ENCODE measurements at regions of chr2 and their contacts with region 1.

Region 1: DNA sequence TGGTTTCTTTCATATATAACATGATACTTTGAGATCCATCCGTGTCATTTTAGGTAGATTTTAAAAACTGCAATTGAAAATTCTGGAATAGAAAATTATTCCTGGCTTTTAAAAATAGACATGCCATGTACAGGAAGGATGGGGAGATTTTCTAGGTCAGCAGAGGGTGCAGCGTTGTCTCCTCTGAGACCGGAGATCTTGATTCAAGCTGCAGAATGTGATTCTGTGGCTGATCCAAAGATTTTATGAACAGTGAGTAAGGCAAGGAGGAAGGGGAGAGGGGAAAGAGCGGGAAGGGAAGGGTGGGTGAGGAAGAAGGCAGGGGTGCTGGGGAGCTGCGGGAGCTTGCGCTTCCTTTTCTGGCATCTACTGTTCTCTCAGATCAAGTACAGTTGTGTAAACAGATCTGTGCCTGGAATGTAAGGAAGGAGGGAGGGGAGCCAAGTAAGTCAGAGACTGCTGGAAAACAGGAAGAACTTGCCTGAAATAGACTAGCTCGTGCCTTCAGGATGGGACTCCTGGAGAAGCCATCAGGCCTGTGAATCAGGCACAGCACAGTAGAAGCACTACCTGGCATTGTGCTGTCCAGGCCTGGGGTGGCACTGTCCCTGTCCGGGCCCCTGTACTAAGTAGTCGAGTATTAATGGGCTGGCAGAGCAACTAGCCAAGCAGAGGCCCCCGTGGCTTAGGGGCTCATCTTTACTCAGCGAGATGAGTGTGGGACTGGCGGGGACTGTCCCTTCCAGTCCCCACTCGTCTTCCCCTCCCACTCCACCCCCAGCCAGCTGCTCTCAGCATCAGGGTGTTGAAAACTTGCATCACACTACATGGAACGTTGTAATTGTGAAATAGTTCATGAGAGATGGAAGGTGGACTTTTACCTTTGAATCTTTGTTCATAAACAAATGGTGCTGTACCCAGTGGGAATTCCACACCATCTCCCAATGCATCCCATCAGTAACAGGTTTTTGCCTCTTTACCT is 163.5 kb downstream of the UXS1 start:
- DNase-seq: peak; percentile 67
- H3K4me3 ChIP-seq: no peak overlapping the region
- H3K27ac ChIP-seq: peak overlapping the region; percentile 64 to 73
- H3K4me1 ChIP-seq: no peaks in the 10 kb centered on the region
- H3K27me3 ChIP-seq: no peaks in the 10 kb centered on the region
- CTCF ChIP-seq: no peak
- POLR2A ChIP-seq: no peak

Region 2: GRCh38 chr2:105990624-105991023 is 40.0 kb before region 1 on chr2:
- intact Hi-C with region 1: no loop called
- DNase-seq: no peak
- H3K4me3 ChIP-seq: no peak overlapping the region
- H3K27ac ChIP-seq: no peak overlapping the region
- H3K4me1 ChIP-seq: no peaks in the 10 kb centered on the region
- H3K27me3 ChIP-seq: no peaks in the 10 kb centered on the region
- CTCF ChIP-seq: no peak
- POLR2A ChIP-seq: no peak

Region 3: GRCh38 chr2:106065268-106065982 is 34.8 kb after region 1 on chr2:
- intact Hi-C with region 1: loop called (anchors 5 kb)
- DNase-seq: no peak
- H3K4me3 ChIP-seq: peak overlapping the region; percentile 26 to 32
- H3K27ac ChIP-seq: peak overlapping the region in 1 of 2 donors; percentile 4
- H3K4me1 ChIP-seq: no peaks in the 10 kb centered on the region
- H3K27me3 ChIP-seq: peaks cover 2% of the 10 kb centered on the region
- CTCF ChIP-seq: no peak
- POLR2A ChIP-seq: no peak

Region 4: GRCh38 chr2:106085181-106085940 is 54.8 kb after region 1 on chr2:
- intact Hi-C with region 1: loop called (anchors 5 kb)
- DNase-seq: peak; percentile 30
- H3K4me3 ChIP-seq: no peak overlapping the region
- H3K27ac ChIP-seq: no peak overlapping the region
- H3K4me1 ChIP-seq: no peaks in the 10 kb centered on the region
- H3K27me3 ChIP-seq: no peaks in the 10 kb centered on the region
- CTCF ChIP-seq: peak in 3 of 4 experiments; percentile 21 to 49 (median 42)
- POLR2A ChIP-seq: no peak

Region 5: DNA sequence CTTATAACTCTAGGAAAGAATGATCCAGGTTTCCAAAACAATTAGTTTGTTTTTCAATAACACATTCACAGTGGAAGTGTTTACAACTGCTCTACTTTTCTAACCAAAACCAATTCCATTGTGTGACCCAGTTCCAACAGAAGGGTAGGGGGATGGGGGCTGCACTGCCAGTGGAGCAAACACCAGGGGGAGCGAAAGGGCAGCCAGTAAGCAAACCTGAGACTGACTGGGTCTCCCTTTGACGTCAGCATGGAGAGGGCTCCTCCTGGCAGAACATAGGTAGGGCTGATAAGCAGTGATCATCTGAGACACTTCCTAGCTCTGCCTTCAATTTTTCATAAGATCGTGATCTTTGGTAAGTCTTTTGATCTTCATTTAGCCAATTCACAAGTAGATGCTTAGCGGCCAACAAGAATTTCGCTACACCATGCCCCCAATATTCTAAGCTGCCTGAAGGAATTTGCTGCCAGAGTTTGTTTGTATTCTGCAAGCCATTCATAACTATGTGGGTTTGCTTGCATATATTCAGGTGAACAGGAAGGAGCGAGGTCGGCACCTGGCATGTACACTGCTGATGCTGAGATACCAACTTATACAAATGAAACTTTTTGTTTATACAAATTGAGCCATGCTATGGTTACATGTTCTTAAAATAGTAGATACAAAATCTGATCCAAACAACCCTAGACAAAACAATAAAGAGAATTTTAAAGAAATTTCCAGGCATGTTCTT is 809.4 kb after region 1 on chr2:
- intact Hi-C with region 1: no loop called
- DNase-seq: peak; percentile 25
- H3K4me3 ChIP-seq: no peak overlapping the region
- H3K27ac ChIP-seq: no peak overlapping the region
- H3K4me1 ChIP-seq: no peaks in the 10 kb centered on the region
- H3K27me3 ChIP-seq: no peaks in the 10 kb centered on the region
- CTCF ChIP-seq: no peak
- POLR2A ChIP-seq: no peak